Activated CD4-positive, alpha-beta T cell treated with anti-CD3 and anti-CD28 coated beads, Interleukin-2, amount 10 ng/mL, durations not matched to agents 24 days and 14 days (primary cell): ENCODE measurements at regions of chr11 and their contacts with region 1.

Region 1: DNA sequence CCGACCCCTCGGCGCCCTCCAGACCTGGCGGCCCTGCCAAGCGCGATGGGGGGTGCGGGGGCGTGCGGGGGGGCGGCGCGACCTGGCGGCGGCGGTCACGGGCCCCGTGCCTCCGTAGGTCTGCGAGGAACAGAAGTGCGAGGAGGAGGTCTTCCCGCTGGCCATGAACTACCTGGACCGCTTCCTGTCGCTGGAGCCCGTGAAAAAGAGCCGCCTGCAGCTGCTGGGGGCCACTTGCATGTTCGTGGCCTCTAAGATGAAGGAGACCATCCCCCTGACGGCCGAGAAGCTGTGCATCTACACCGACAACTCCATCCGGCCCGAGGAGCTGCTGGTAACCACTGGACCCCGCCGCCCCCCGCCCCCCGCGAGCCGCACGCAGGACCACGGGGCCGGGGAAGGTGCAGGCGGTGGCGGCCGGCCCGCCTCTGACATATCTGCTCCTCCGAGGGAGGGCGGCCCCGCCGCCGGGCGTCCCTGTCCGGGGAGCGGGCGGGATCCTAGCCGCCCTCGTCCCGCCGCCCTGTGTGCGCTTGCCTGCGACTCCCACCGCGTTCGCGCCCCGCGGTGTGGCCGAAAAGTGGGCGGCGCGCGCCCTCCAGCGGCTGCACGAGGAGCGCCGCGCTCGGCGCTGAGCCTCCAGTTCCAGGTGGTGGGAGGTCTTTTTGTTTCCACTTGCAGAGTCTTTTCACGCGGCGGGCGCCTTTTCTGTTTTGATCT is 2.1 kb downstream of the CCND1 start:
- DNase-seq: peak; percentile 93
- H3K4me3 Mint-ChIP-seq: peak overlapping the region; percentile 70
- H3K27ac Mint-ChIP-seq: no peak overlapping the region
- H3K4me1 Mint-ChIP-seq: peaks cover 3% of the 10 kb centered on the region
- H3K27me3 Mint-ChIP-seq: peaks cover 27% of the 10 kb centered on the region

Region 2: GRCh38 chr11:68843703-68844312 is 799.3 kb before region 1 on chr11:
- intact Hi-C with region 1: loop called (anchors 5 kb)
- DNase-seq: peak; percentile 90
- H3K4me3 Mint-ChIP-seq: peak overlapping the region; percentile 81
- H3K27ac Mint-ChIP-seq: peak overlapping the region; percentile 81
- H3K4me1 Mint-ChIP-seq: peaks cover 30% of the 10 kb centered on the region
- H3K27me3 Mint-ChIP-seq: peaks cover 15% of the 10 kb centered on the region

Region 3: GRCh38 chr11:69122642-69123431 is 520.2 kb before region 1 on chr11:
- intact Hi-C with region 1: loop called (anchors 1 kb)
- DNase-seq: peak; percentile 84
- H3K4me3 Mint-ChIP-seq: peak overlapping the region; percentile 74
- H3K27ac Mint-ChIP-seq: peak overlapping the region; percentile 86
- H3K4me1 Mint-ChIP-seq: peaks cover 27% of the 10 kb centered on the region
- H3K27me3 Mint-ChIP-seq: no peaks in the 10 kb centered on the region

Region 4: GRCh38 chr11:69546735-69547370 is 96.2 kb before region 1 on chr11:
- intact Hi-C with region 1: loop called (anchors 5 kb)
- DNase-seq: peak; percentile 66
- H3K4me3 Mint-ChIP-seq: peak overlapping the region; percentile 29
- H3K27ac Mint-ChIP-seq: peak overlapping the region; percentile 41
- H3K4me1 Mint-ChIP-seq: peaks cover 10% of the 10 kb centered on the region
- H3K27me3 Mint-ChIP-seq: peaks cover 23% of the 10 kb centered on the region

Region 5: GRCh38 chr11:69662017-69662698 is 19.1 kb after region 1 on chr11:
- intact Hi-C with region 1: no loop called
- DNase-seq: no peak
- H3K4me3 Mint-ChIP-seq: no peak overlapping the region
- H3K27ac Mint-ChIP-seq: no peak overlapping the region
- H3K4me1 Mint-ChIP-seq: no peaks in the 10 kb centered on the region
- H3K27me3 Mint-ChIP-seq: no peaks in the 10 kb centered on the region

Region 6: DNA sequence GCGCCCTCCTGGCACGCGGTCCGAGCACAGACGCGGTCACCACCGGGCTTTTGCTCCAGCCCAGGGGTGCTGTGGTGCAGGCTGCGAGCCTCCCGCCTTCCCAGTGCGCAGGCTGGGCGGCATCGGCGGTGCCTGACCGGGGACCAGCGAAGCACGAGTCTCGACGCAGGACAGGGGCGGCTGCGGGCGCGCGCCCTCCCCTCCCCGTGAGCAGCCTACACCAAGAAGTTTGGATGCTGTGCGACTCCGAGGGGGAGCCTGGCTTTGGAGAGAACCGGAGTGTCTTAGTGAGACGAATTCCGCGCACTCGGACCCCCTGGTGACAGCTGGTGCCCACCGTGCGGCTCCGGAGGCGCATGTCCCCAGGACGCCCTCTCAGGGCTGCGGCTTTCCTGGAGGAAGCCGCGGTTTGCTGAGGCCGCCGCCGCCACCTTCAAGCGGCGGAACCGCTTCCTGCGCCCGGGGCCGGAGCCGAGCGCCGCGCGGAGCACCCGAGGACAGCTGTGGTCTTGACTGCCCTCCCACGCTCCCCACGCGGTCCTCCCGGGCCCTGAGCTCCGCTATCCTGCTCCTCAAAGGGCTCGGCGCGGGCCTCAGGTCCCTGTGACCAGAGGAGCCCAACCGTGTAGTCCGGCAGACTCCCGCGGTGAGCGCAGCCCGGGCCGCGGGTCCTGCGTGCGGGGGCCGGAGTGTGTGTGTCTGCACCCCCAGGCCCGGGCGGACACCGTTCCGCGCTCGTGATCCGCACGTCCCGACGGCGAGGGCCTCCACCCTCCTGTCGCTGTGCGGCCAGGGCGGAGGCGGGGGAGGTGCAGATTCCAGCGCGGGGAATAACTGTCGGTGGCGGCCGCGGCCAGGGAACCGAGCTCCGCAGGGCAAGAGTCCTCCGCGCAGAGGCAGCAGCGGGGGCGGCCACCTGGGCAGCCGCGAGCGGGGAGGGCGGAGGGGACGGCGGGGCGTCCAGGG is 174.5 kb after region 1 on chr11:
- intact Hi-C with region 1: loop called (anchors 5 kb)
- DNase-seq: peak; percentile 57
- H3K4me3 Mint-ChIP-seq: no peak overlapping the region
- H3K27ac Mint-ChIP-seq: no peak overlapping the region
- H3K4me1 Mint-ChIP-seq: peaks cover 2% of the 10 kb centered on the region
- H3K27me3 Mint-ChIP-seq: peaks cover 33% of the 10 kb centered on the region